Mammary epithelial cell (primary cell): ENCODE measurements at regions of chr1 and their contacts with region 1.

Region 1: GRCh38 chr1:11053758-11054137 is 6.1 kb downstream of the SRM start:
- DNase-seq: no peak
- H3K4me3 ChIP-seq: no peak overlapping the region
- H3K27ac ChIP-seq: no peak overlapping the region
- H3K4me1 ChIP-seq: no peaks in the 10 kb centered on the region
- H3K27me3 ChIP-seq: no peaks in the 10 kb centered on the region
- CTCF ChIP-seq: no peak

Region 2: GRCh38 chr1:11099310-11100149 is 45.8 kb after region 1 on chr1 and contains the start of gene EXOSC10:
- CTCF ChIA-PET with region 1: no interaction called
- dilution Hi-C with region 1: loop called (anchors 5 kb)
- in situ Hi-C with region 1: no loop called
- intact Hi-C with region 1: no loop called
- DNase-seq: peak; percentile 83
- H3K4me3 ChIP-seq: peak within 1 kb of the TSS; percentile 77 to 97 (median 93)
- H3K27ac ChIP-seq: peak within 1 kb of the TSS; percentile 82
- H3K4me1 ChIP-seq: no peaks in the 10 kb centered on the region
- H3K27me3 ChIP-seq: no peaks in the 10 kb centered on the region
- CTCF ChIP-seq: no peak
- total RNA-seq, gene EXOSC10: 62.0 to 66.6 TPM

Region 3: DNA sequence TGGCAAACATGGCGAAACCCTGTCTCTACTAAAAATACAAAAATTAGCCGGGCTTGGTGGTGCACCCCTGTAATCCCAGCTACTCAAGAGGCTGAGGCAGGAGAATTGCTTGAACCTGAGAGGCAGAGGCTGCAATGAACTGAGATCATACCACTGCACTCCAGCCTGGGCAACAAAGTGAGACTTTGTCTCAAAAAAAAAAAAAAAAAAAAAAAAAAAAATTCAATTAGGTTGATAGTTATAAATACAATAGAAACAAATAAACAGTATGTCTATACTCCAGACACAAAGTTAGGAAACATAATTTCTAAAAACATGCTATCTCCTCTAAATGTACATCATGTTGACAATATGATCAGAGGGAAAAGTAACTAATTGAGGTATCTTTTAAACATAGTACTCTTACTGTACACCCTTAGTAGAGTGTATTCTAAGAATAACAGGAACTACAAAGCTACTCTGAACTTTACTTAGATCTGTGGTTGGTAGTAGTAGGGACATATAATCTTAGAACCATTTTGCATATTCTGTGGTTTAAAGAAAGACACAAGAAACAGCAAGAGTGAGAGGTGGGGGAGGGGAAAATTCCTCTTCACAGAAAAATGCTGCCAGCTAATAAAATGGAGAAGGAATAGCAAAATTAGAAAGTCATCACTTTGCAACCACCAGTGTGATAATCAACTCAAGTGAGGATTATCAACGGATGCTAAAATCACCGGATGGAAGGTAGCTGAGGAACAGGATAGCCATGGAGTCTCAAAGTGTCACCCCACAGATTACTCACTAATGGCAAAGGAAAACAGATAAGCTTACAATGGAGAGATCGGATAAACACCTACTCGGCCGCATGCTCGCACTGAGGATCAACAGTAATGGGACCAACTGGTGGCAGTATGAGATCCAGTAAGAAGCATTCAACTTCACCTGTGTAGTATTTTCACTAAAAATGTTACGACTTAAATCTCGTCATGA is 173.6 kb after region 1 on chr1:
- CTCF ChIA-PET with region 1: no interaction called
- dilution Hi-C with region 1: loop called (anchors 5 kb)
- in situ Hi-C with region 1: no loop called
- intact Hi-C with region 1: no loop called
- DNase-seq: no peak
- H3K4me3 ChIP-seq: no peak overlapping the region
- H3K27ac ChIP-seq: no peak overlapping the region
- H3K4me1 ChIP-seq: no peaks in the 10 kb centered on the region
- H3K27me3 ChIP-seq: no peaks in the 10 kb centered on the region
- CTCF ChIP-seq: no peak